CD4-positive, alpha-beta memory T cell (primary cell): ENCODE measurements at regions of chr4 and their contacts with region 1.

Region 1: DNA sequence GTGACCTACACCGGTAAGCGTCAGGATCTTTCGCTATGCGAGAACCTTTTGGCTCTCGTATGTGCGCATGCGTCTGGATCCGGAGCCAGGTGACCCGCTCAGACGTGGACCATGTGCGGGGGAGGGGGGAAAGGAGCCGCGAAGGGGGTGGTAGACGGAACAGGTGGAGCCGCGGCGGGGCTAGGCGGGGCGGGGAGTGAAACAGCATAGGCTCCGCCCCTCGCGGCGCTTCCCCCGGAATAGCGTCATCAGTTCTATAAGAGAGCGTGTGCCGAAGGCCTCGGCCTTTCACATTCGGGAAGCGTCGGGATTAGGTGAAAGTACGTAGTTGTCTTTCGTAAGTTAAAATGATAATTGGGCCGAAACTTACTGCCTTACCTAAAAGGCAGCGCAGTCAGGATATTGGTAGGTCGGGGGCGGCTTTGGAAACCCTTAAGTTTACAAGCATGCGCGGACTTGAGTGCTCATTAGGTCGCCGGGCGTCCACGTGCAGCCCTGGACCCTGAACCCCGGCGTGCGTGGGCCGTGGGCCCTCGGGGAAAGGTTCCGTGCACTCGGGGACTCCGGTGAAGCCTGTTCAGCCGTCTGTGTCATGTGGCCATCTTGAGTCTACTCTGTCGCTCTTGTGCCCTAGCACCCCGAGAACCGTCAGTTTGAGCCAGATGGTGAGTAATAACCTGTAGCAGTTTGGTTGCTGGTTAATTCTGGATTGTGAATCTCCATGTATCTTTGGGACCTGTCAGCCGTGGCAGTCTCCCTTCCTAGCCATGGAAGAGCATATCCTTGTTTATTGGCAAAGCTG is 74.1 kb downstream of the PRSS12 start:
- DNase-seq: peak; percentile 93 to 99 (median 97)
- H3K4me3 ChIP-seq: peak overlapping the region; percentile 32 to 69
- H3K4me3 Mint-ChIP-seq: peak overlapping the region; percentile 90 to 99 (median 94)
- H3K27ac ChIP-seq: peak overlapping the region; percentile 96
- H3K27ac Mint-ChIP-seq: peak overlapping the region; percentile 94 to 100 (median 98)
- H3K4me1 ChIP-seq: peaks cover 37% of the 10 kb centered on the region
- H3K4me1 Mint-ChIP-seq: peaks cover 22 to 57% (median 40%) of the 10 kb centered on the region in 4 donors
- H3K27me3 ChIP-seq: no peaks in the 10 kb centered on the region
- H3K27me3 Mint-ChIP-seq: no peaks in the 10 kb centered on the region

Region 2: DNA sequence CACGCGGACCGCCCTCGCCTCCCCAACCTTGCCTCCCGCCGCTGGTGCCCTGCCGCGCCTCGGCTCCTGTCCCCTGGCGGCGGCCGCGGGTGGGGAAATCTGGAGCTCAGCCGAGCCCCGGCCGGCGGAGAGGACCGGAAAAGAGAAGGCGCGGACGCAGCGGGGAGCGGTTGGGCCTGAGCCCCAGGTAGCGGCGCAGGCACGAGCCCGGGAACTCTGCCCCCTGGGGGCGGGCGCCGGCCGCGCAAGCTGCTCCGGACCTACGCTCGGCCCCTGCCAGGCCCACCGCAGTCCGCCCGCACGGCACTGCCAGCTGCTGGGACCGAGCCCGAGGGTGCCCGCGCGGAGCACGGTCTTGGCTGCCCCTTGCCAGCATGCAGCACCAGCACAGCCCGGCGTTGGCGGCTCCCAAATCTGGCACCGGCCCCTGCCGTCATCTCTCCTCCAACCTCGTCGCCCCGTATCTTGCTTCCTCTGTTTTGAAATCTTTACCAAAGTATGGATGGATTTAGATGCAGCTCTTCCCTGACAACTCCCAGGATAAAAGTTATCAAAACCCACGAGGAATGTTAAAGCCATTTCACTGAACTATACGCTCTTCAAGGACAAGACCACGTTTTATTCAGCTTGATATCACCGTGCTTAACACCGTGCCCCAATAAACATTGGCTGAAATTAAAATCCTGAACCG is 74.3 kb after region 1 on chr4 and contains the start of gene PRSS12:
- CTCF ChIA-PET with region 1: interaction called, 6 read pairs
- POLR2A ChIA-PET with region 1: interaction called, 5 read pairs
- intact Hi-C with region 1: loop called (anchors 1 kb)
- DNase-seq: peak; percentile 36 to 43 (median 39)
- H3K4me3 ChIP-seq: peak within 1 kb of the TSS in 1 of 2 donors; percentile 25
- H3K4me3 Mint-ChIP-seq: peak within 1 kb of the TSS; percentile 62 to 91 (median 80)
- H3K27ac ChIP-seq: no peak within 1 kb of the TSS
- H3K27ac Mint-ChIP-seq: no peak within 1 kb of the TSS
- H3K4me1 ChIP-seq: peaks cover 12% of the 10 kb centered on the region
- H3K4me1 Mint-ChIP-seq: peaks cover 8 to 17% (median 11%) of the 10 kb centered on the region in 4 donors
- H3K27me3 ChIP-seq: peaks cover 24% of the 10 kb centered on the region
- H3K27me3 Mint-ChIP-seq: peaks cover 55 to 68% of the 10 kb centered on the region in 2 donors
- total RNA-seq, gene PRSS12: not detected

Region 3: GRCh38 chr4:118586357-118586790 is 307.7 kb after region 1 on chr4:
- CTCF ChIA-PET with region 1: no interaction called
- POLR2A ChIA-PET with region 1: interaction called, 3 read pairs
- intact Hi-C with region 1: loop called (anchors 1 kb)
- DNase-seq: no peak
- H3K4me3 ChIP-seq: no peak overlapping the region
- H3K4me3 Mint-ChIP-seq: no peak overlapping the region
- H3K27ac ChIP-seq: no peak overlapping the region
- H3K27ac Mint-ChIP-seq: peak overlapping the region in 1 of 7 donors; percentile 2
- H3K4me1 ChIP-seq: peaks cover 6% of the 10 kb centered on the region
- H3K4me1 Mint-ChIP-seq: peaks cover 5 to 16% (median 10%) of the 10 kb centered on the region in 4 donors
- H3K27me3 ChIP-seq: peaks cover 4% of the 10 kb centered on the region
- H3K27me3 Mint-ChIP-seq: peaks cover 14 to 23% of the 10 kb centered on the region in 2 donors

Region 4: GRCh38 chr4:118684873-118685811 is 406.5 kb after region 1 on chr4 and contains the start of gene METTL14:
- CTCF ChIA-PET with region 1: no interaction called
- POLR2A ChIA-PET with region 1: interaction called, 4 read pairs
- intact Hi-C with region 1: loop called (anchors 1 kb)
- DNase-seq: peak; percentile 83 to 87 (median 83)
- H3K4me3 ChIP-seq: peak within 1 kb of the TSS; percentile 60 to 87
- H3K4me3 Mint-ChIP-seq: peak within 1 kb of the TSS; percentile 94 to 98 (median 97)
- H3K27ac ChIP-seq: peak within 1 kb of the TSS; percentile 80
- H3K27ac Mint-ChIP-seq: peak within 1 kb of the TSS; percentile 85 to 99 (median 98)
- H3K4me1 ChIP-seq: peaks cover 27% of the 10 kb centered on the region
- H3K4me1 Mint-ChIP-seq: peaks cover 20 to 31% (median 25%) of the 10 kb centered on the region in 4 donors
- H3K27me3 ChIP-seq: no peaks in the 10 kb centered on the region
- H3K27me3 Mint-ChIP-seq: no peaks in the 10 kb centered on the region
- total RNA-seq, gene METTL14: 67.2 to 70.5 TPM

Region 5: GRCh38 chr4:118850488-118851173 is 572.0 kb after region 1 on chr4:
- CTCF ChIA-PET with region 1: no interaction called
- POLR2A ChIA-PET with region 1: no interaction called
- intact Hi-C with region 1: loop called (anchors 5 kb)
- DNase-seq: peak; percentile 54 to 72 (median 66)
- H3K4me3 ChIP-seq: peak overlapping the region; percentile 63 to 72
- H3K4me3 Mint-ChIP-seq: peak overlapping the region; percentile 94 to 97 (median 96)
- H3K27ac ChIP-seq: peak overlapping the region; percentile 75
- H3K27ac Mint-ChIP-seq: peak overlapping the region; percentile 83 to 98 (median 96)
- H3K4me1 ChIP-seq: peaks cover 18% of the 10 kb centered on the region
- H3K4me1 Mint-ChIP-seq: peaks cover 19 to 34% (median 26%) of the 10 kb centered on the region in 4 donors
- H3K27me3 ChIP-seq: no peaks in the 10 kb centered on the region
- H3K27me3 Mint-ChIP-seq: peaks cover 2 to 4% of the 10 kb centered on the region in 2 donors

Region 6: GRCh38 chr4:118883861-118884260 is 605.2 kb after region 1 on chr4:
- CTCF ChIA-PET with region 1: no interaction called
- POLR2A ChIA-PET with region 1: no interaction called
- intact Hi-C with region 1: no loop called
- DNase-seq: no peak
- H3K4me3 ChIP-seq: no peak overlapping the region
- H3K4me3 Mint-ChIP-seq: no peak overlapping the region
- H3K27ac ChIP-seq: no peak overlapping the region
- H3K27ac Mint-ChIP-seq: no peak overlapping the region
- H3K4me1 ChIP-seq: peaks cover 9% of the 10 kb centered on the region
- H3K4me1 Mint-ChIP-seq: peaks cover 4 to 5% (median 5%) of the 10 kb centered on the region in 4 donors
- H3K27me3 ChIP-seq: peaks cover 1% of the 10 kb centered on the region
- H3K27me3 Mint-ChIP-seq: peaks cover 10 to 12% of the 10 kb centered on the region in 2 donors

Region 7: GRCh38 chr4:119300101-119300978 is 1021.7 kb after region 1 on chr4:
- CTCF ChIA-PET with region 1: no interaction called
- POLR2A ChIA-PET with region 1: interaction called, 7 read pairs
- intact Hi-C with region 1: loop called (anchors 2 kb)
- DNase-seq: peak; percentile 88 to 91 (median 90)
- H3K4me3 ChIP-seq: peak overlapping the region; percentile 95 to 99
- H3K4me3 Mint-ChIP-seq: peak overlapping the region; percentile 95 to 100 (median 98)
- H3K27ac ChIP-seq: peak overlapping the region; percentile 92
- H3K27ac Mint-ChIP-seq: peak overlapping the region; percentile 96 to 100 (median 99)
- H3K4me1 ChIP-seq: peaks cover 27% of the 10 kb centered on the region
- H3K4me1 Mint-ChIP-seq: peaks cover 24 to 42% (median 34%) of the 10 kb centered on the region in 4 donors
- H3K27me3 ChIP-seq: no peaks in the 10 kb centered on the region
- H3K27me3 Mint-ChIP-seq: no peaks in the 10 kb centered on the region